ENCODE measurements at regions of chr4 and their contacts with region 1.

Region 1: DNA sequence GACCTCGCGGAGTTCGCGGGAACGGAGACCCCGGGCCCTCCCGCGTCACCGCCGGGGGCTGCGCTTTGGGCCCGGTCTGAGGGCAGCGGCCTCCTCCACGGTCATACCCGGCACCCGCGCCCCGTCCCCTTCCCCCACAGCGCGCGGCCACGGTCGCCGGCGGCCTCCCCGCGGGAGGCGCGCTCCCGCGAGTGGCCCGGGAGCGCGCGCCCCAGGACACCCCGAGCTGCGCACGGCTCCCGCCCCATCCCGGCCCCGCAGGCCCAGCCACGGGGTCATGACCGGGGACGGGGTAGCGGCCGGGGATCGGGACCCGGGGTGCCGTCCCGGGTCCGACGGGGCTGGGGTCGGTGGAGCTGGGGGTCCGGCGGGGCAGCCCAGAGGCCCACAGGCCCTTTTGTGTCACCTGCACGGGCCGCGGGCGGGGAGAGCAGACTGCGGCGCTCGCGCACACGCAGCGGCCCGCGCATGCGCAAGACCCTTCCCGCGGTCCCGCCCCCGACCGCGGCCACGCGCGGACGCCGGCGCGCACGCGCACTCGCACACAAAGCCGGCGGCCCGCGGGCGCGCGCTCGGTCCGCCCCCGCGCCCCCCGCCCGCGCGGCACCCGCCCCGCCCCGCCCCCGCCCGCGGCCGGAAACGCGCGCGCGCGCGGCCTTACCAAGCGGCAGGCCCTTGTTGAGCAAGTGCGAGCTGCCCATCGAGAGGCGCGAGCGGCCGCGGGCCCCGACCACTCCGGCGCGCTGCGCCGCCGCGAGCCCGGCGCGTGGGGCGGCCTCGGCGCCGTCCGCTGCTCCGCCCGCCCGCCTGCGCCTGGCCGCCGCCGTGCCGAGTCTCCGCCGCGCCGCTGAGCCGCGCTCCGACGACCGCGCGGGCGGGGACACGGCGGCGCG is at the start of gene CTBP1:
- DNase-seq: peak; percentile 86 to 99 (median 94)
- ATAC-seq: peak; percentile 71
- H3K4me3 ChIP-seq: peak within 1 kb of the TSS; percentile 86
- H3K27ac ChIP-seq: peak within 1 kb of the TSS; percentile 86
- H3K4me1 ChIP-seq: peaks cover 4 to 73% of the 10 kb centered on the region in 2 experiments; a peak in 4 of 5 replicates
- H3K27me3 ChIP-seq: no peaks in the 10 kb centered on the region
- CTCF ChIP-seq: no peak
- EP300 ChIP-seq: no peak
- POLR2A ChIP-seq: peak; percentile 68
- RAD21 ChIP-seq: no peak
- polyA plus RNA-seq, gene CTBP1: 14.5 to 20.0 TPM

Region 2: GRCh38 chr4:1260418-1261106 is 12.1 kb after region 1 on chr4:
- CTCF ChIA-PET with region 1: no interaction called
- POLR2A ChIA-PET with region 1: interaction called, 13 read pairs
- in situ Hi-C with region 1: no loop called
- intact Hi-C with region 1: no loop called
- DNase-seq: no peak
- ATAC-seq: no peak
- H3K4me3 ChIP-seq: no peak overlapping the region
- H3K27ac ChIP-seq: no peak overlapping the region
- H3K4me1 ChIP-seq: peaks cover 0 to 4% of the 10 kb centered on the region in 2 experiments; a peak in 2 of 5 replicates
- H3K27me3 ChIP-seq: peaks cover 27 to 39% of the 10 kb centered on the region in 2 experiments
- CTCF ChIP-seq: no peak
- EP300 ChIP-seq: no peak
- POLR2A ChIP-seq: no peak
- RAD21 ChIP-seq: no peak

Region 3: GRCh38 chr4:1346781-1347409 is 98.4 kb after region 1 on chr4 and contains the start of gene UVSSA:
- CTCF ChIA-PET with region 1: no interaction called
- POLR2A ChIA-PET with region 1: interaction called, 5 read pairs
- in situ Hi-C with region 1: no loop called
- intact Hi-C with region 1: loop called (anchors 1 kb)
- DNase-seq: peak; percentile 98 to 100 (median 99)
- ATAC-seq: peak; percentile 95
- H3K4me3 ChIP-seq: peak within 1 kb of the TSS; percentile 95
- H3K27ac ChIP-seq: peak within 1 kb of the TSS; percentile 95
- H3K4me1 ChIP-seq: peaks cover 10 to 55% of the 10 kb centered on the region in 2 experiments
- H3K27me3 ChIP-seq: no peaks in the 10 kb centered on the region
- CTCF ChIP-seq: no peak
- EP300 ChIP-seq: no peak
- POLR2A ChIP-seq: peak; percentile 39; the same call in 1 of the 2 replicates
- RAD21 ChIP-seq: no peak
- polyA plus RNA-seq, gene UVSSA: 0.21 to 0.27 TPM

Region 4: DNA sequence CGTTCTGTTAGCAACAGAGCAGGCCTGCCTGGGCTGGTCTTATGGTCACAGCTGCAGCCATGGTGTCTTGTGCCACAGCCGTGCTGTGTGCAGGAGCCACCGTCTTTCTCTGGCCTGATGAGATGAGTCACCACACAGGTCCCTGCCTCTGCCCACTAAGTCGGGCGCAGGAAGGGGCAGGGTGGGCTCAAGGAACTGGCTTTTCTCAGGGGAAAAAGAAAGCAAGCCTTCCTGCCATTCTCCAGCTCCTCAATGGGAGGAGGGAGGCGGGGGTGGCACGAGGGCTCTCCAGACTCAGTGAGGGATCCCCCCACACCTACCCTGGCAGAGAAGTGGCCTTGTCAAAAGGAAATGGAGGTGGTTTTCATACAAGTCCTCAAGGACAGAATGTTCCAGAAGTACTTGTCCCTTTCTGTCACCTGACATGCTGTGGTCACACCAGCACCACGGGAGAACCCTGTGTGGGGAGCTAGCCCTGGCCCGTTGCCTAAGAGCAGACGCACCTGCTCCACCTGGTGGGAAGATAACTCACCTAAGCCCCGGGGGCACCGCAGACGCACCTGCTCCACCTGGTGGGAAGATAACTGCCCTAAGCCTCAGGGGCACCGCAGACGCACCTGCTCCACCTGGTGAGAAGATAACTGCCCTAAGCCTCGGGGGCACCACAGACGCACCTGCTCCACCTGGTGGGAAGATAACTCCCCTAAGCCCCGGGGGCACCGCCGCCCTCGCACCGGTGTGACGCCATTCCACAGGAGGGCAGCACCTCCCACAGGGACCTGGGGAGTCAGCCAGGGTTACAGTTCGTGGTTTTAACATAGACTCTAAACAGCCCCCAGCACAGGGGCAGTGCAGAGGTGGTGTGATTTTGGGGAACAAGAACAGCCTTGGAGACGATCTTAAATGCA is 117.0 kb after region 1 on chr4:
- CTCF ChIA-PET with region 1: no interaction called
- POLR2A ChIA-PET with region 1: no interaction called
- in situ Hi-C with region 1: no loop called
- intact Hi-C with region 1: no loop called
- DNase-seq: peak in 1 of 4 experiments; percentile 35
- ATAC-seq: peak; percentile 61; the same call in 2 of the 3 replicates
- H3K4me3 ChIP-seq: no peak overlapping the region
- H3K27ac ChIP-seq: no peak overlapping the region
- H3K4me1 ChIP-seq: peaks cover 0 to 23% of the 10 kb centered on the region in 2 experiments; a peak in 2 of 5 replicates
- H3K27me3 ChIP-seq: no peaks in the 10 kb centered on the region
- CTCF ChIP-seq: peak; percentile 23 to 46 (median 34); a peak in 5 of 6 replicates
- EP300 ChIP-seq: no peak
- POLR2A ChIP-seq: no peak
- RAD21 ChIP-seq: no peak